ENCODE measurements at regions of chr9 and their contacts with region 1.

Region 1: DNA sequence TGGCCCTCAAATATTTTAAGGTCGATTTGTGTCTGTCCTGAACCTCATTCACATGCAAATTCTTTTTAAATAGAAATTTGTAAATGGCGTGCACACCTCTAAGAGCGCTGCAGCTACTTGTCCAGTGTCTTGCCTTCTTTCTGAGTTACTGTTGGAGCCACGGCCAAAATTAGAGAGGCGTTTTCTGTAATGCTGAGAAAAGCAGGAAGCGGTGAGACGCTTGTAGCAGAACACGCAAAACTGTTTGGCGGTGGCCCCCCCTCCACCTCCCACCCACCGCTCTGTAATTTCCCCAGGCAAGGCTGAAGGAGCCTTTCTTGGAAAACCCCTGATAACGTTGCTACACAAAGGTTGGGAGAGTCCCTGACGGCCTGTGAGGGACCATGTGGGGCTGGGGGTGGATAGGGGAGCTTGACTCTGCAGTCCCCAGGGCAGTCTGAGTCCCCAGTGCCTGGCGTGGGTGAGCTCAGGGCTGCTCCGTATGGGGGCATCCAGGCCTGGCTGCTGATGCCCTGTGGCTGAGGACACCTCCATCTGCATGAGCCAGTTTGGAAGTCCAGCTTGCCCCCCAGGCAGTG is 96.5 kb downstream of the GADD45G start:
- DNase-seq: peak; percentile 62
- H3K4me3 Mint-ChIP-seq: peak overlapping the region; percentile 90
- H3K27ac Mint-ChIP-seq: peak overlapping the region; percentile 91
- H3K4me1 Mint-ChIP-seq: peaks cover 64% of the 10 kb centered on the region
- H3K27me3 Mint-ChIP-seq: no peaks in the 10 kb centered on the region

Region 2: DNA sequence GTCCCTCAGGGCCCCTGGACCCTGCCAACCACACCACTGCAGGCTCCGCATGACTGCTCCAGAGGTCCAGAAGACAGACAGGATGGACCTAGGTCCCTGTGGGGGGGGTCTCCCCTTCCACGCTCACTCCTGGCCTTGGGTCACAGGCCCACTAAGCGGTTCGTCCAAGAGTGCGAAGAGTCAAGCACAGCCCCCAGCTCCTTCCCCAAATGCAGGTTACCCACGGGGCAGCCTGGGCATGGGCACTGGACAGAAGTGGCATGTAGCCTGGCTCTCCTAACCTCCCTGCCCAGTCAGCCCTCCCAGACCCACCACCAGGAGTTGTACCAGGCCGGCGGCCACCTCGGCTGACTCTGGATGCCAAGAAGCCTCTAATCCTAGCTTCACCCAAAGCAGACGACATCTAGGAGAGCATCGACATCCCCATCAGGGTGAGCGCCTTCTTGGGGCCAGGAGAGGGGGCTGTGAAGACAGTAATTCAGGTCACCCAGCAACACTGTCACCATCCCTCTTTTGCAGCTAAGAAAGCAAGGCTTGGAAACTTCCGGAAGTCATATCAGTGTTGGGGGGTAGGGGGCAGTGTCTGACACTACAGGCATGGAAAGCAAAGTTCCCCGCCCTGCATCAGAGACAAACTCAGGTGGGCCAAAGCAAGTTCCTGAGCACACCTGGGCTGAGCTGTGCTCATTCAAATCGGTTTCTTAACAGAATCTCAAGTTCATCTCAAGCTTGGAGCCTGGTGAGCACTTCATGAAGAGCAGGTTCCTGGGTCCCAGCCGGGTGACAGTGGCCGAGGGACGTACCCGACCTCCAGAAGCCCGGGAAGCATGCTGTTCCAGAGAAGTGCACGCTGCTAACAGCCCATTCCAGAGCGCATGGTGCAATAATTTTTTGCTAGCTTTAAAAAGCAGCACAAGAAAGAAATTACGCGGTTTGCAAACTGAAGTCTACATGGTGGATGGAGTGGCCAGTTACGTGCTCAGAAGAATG is 272.1 kb before region 1 on chr9:
- intact Hi-C with region 1: loop called (anchors 10 kb)
- DNase-seq: no peak
- H3K4me3 Mint-ChIP-seq: peak overlapping the region; percentile 17
- H3K27ac Mint-ChIP-seq: peak overlapping the region; percentile 90
- H3K4me1 Mint-ChIP-seq: peaks cover 79% of the 10 kb centered on the region
- H3K27me3 Mint-ChIP-seq: no peaks in the 10 kb centered on the region

Region 3: DNA sequence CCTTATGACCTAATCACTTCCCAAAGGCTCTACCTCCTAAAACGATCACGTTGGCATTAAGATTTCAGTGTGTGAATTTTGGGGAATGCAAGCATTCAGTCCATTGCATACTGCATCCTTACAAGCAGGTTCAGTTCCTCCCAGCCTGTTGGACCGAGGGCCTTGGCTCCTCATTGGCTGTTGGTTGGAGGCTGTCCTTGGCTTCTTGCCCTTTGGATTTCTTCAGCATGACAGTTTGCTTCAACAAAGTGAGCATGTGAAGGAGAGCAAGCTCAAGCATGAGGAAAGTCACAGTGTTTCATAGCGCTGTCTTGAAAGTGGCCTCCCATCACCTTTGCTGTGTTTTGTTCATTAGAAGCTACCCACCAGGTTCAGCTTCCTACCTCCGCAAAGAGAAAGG is 13.0 kb after region 1 on chr9:
- intact Hi-C with region 1: loop called (anchors 2 kb)
- DNase-seq: no peak
- H3K4me3 Mint-ChIP-seq: no peak overlapping the region
- H3K27ac Mint-ChIP-seq: no peak overlapping the region
- H3K4me1 Mint-ChIP-seq: peaks cover 47% of the 10 kb centered on the region
- H3K27me3 Mint-ChIP-seq: no peaks in the 10 kb centered on the region

Region 4: GRCh38 chr9:89738137-89738932 is 37.0 kb after region 1 on chr9:
- intact Hi-C with region 1: loop called (anchors 1 kb)
- DNase-seq: no peak
- H3K4me3 Mint-ChIP-seq: no peak overlapping the region
- H3K27ac Mint-ChIP-seq: peak overlapping the region; percentile 90
- H3K4me1 Mint-ChIP-seq: peaks cover 64% of the 10 kb centered on the region
- H3K27me3 Mint-ChIP-seq: no peaks in the 10 kb centered on the region

Region 5: GRCh38 chr9:89743573-89744361 is 42.5 kb after region 1 on chr9:
- intact Hi-C with region 1: loop called (anchors 1 kb)
- DNase-seq: peak; percentile 73
- H3K4me3 Mint-ChIP-seq: peak overlapping the region; percentile 6
- H3K27ac Mint-ChIP-seq: peak overlapping the region; percentile 97
- H3K4me1 Mint-ChIP-seq: peaks cover 76% of the 10 kb centered on the region
- H3K27me3 Mint-ChIP-seq: no peaks in the 10 kb centered on the region

Region 6: GRCh38 chr9:89821104-89821480 is 119.8 kb after region 1 on chr9:
- intact Hi-C with region 1: loop called (anchors 10 kb)
- DNase-seq: no peak
- H3K4me3 Mint-ChIP-seq: no peak overlapping the region
- H3K27ac Mint-ChIP-seq: no peak overlapping the region
- H3K4me1 Mint-ChIP-seq: peaks cover 11% of the 10 kb centered on the region
- H3K27me3 Mint-ChIP-seq: peaks cover 7% of the 10 kb centered on the region

Region 7: GRCh38 chr9:89919169-89919681 is 217.9 kb after region 1 on chr9:
- intact Hi-C with region 1: loop called (anchors 1 kb)
- DNase-seq: peak; percentile 31
- H3K4me3 Mint-ChIP-seq: peak overlapping the region; percentile 46
- H3K27ac Mint-ChIP-seq: peak overlapping the region; percentile 68
- H3K4me1 Mint-ChIP-seq: peaks cover 54% of the 10 kb centered on the region
- H3K27me3 Mint-ChIP-seq: peaks cover 1% of the 10 kb centered on the region

Measured in activated T-helper 2 cell treated with anti-CD3 and anti-CD28 coated beads, Interferon-gamma antibody, Interleukin-2, Interleukin-4, amounts not matched to agents 10 μg/mL and 5 μg/mL and 100 μg/mL, durations not matched to agents 14 hours and 24 hours and 36 hours (primary cell).